Activated naive CD4-positive, alpha-beta T cell treated with anti-CD3 and anti-CD28 coated beads for 36 hours (primary cell): ENCODE measurements at regions of chr3 and their contacts with region 1.

Region 1: GRCh38 chr3:71984843-71985613 is 200.1 kb upstream of the PROK2 start:
- DNase-seq: peak; percentile 76
- H3K4me3 Mint-ChIP-seq: peak overlapping the region; percentile 48
- H3K27ac Mint-ChIP-seq: peak overlapping the region; percentile 84
- H3K4me1 Mint-ChIP-seq: peaks cover 43% of the 10 kb centered on the region
- H3K27me3 Mint-ChIP-seq: peaks cover 6% of the 10 kb centered on the region

Region 2: DNA sequence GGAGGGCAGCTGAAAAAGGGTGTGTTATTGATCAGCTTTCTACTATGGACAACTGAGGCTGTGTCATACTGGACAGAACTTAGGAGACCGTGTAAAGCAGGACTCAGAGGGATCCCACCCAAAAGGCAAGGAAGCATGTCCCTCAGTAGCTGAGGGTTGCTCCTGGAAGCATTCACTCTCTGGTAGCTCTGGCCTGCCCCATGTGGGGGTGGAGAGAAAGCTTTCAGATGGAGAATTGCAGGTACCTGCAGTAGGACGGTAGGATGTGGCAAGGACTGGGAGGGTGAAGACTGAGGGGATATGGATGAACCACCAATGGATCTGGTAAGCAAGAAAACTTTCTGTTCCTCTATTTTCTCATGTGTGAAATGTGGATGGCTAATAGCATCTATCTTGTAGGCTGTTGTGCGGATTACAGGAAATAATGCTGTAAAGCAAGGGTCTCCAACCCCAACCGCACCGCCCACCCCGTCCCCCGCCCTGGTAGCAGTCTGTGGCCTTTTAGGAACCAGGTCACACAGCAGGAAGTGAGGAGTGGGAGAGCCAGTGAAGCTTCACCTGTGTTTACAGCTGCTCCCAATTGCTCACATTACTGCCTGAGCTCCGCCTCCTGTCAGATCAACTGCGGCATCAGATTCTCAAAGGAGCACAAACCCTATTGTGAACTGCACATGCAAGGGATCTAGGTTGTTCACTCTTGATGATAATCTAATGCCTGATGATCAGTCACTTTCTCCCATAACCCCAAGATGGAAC is 42.4 kb before region 1 on chr3:
- CTCF ChIA-PET with region 1: no interaction called
- intact Hi-C with region 1: loop called (anchors 1 kb)
- DNase-seq: no peak
- H3K4me3 Mint-ChIP-seq: no peak overlapping the region
- H3K27ac Mint-ChIP-seq: no peak overlapping the region
- H3K4me1 Mint-ChIP-seq: peaks cover 4% of the 10 kb centered on the region
- H3K27me3 Mint-ChIP-seq: peaks cover 3% of the 10 kb centered on the region

Region 3: GRCh38 chr3:72080095-72080494 is 95.1 kb after region 1 on chr3:
- CTCF ChIA-PET with region 1: no interaction called
- intact Hi-C with region 1: loop called (anchors 1 kb)
- DNase-seq: no peak
- H3K4me3 Mint-ChIP-seq: no peak overlapping the region
- H3K27ac Mint-ChIP-seq: no peak overlapping the region
- H3K4me1 Mint-ChIP-seq: peaks cover 29% of the 10 kb centered on the region
- H3K27me3 Mint-ChIP-seq: peaks cover 3% of the 10 kb centered on the region

Region 4: DNA sequence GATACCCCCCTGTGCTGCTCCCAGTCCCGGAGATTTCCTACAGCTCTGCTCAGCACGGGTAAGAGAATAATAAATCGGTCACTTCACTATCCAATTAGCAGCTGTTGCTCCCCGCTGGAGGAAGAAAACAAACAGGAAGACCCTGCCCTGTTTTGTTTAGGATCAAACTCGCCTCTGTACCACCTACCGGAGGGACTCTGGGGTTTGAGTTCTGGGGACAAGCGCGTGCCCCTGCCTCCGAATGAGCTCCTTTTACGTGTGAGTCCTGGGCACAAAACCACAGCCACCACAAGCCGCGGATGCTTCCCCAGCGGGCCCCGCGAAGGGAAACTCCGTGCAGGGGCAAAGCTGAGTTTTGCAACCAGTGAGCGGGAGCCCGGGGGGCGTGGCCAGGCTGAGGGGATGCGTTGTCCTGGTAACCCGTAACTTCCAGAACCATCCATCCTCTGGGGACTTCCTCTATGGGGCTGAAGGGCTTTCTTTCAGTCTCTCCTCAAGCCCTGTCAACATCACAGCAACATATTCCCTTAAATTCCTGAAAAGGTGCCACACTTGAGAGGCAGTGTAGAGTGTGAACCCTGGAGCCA is 115.7 kb after region 1 on chr3:
- CTCF ChIA-PET with region 1: interaction called, 3 read pairs
- intact Hi-C with region 1: loop called (anchors 1 kb)
- DNase-seq: peak; percentile 99
- H3K4me3 Mint-ChIP-seq: peak overlapping the region; percentile 79
- H3K27ac Mint-ChIP-seq: peak overlapping the region; percentile 89
- H3K4me1 Mint-ChIP-seq: peaks cover 26% of the 10 kb centered on the region
- H3K27me3 Mint-ChIP-seq: peaks cover 7% of the 10 kb centered on the region